ENCODE measurements at regions of chr5 and their contacts with region 1.

Region 1: GRCh38 chr5:21919410-21920022 is 933.6 kb downstream of the CDH12 start:
- DNase-seq: peak; percentile 79
- H3K4me3 ChIP-seq: no peak overlapping the region
- H3K27ac ChIP-seq: no peak overlapping the region
- H3K4me1 ChIP-seq: peaks cover 18% of the 10 kb centered on the region
- H3K27me3 ChIP-seq: no peaks in the 10 kb centered on the region
- CTCF ChIP-seq: peak; percentile 50 to 55
- POLR2A ChIP-seq: no peak

Region 2: GRCh38 chr5:21672911-21673310 is 246.6 kb before region 1 on chr5:
- CTCF ChIA-PET with region 1: no interaction called
- POLR2A ChIA-PET with region 1: no interaction called
- dilution Hi-C with region 1: no loop called
- intact Hi-C with region 1: no loop called
- DNase-seq: no peak
- H3K4me3 ChIP-seq: no peak overlapping the region
- H3K27ac ChIP-seq: no peak overlapping the region
- H3K4me1 ChIP-seq: peaks cover 1% of the 10 kb centered on the region
- H3K27me3 ChIP-seq: no peaks in the 10 kb centered on the region
- CTCF ChIP-seq: no peak
- POLR2A ChIP-seq: no peak

Region 3: GRCh38 chr5:21817668-21818369 is 101.7 kb before region 1 on chr5:
- CTCF ChIA-PET with region 1: interaction called, 4 read pairs
- POLR2A ChIA-PET with region 1: no interaction called
- dilution Hi-C with region 1: no loop called
- intact Hi-C with region 1: loop called (anchors 5 kb)
- DNase-seq: peak; percentile 21
- H3K4me3 ChIP-seq: peak overlapping the region in 2 of 3 experiments; percentile 8 to 11
- H3K27ac ChIP-seq: no peak overlapping the region
- H3K4me1 ChIP-seq: peaks cover 10% of the 10 kb centered on the region
- H3K27me3 ChIP-seq: no peaks in the 10 kb centered on the region
- CTCF ChIP-seq: no peak
- POLR2A ChIP-seq: no peak

Region 4: DNA sequence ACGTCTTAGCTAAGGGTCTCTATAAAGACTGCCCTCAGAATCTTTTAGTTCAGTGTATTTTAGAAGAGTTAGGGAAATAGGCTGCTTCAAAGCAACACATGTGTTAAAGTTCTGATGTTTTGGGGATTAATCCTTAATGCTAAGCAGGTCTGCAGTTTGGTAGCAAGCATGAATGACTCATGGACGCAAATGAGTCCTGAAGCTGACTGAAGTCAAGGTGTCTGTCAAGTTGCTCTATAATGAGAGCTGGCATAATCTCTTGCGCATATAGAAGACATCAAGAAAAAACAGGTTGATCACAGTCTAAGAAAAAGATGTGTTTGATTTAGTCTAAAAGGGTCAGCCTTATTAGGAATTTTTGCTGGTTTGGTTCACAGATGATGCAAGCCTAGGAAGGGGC is 303.6 kb after region 1 on chr5:
- CTCF ChIA-PET with region 1: interaction called, 3 read pairs
- POLR2A ChIA-PET with region 1: no interaction called
- dilution Hi-C with region 1: no loop called
- intact Hi-C with region 1: loop called (anchors 10 kb)
- DNase-seq: no peak
- H3K4me3 ChIP-seq: no peak overlapping the region
- H3K27ac ChIP-seq: no peak overlapping the region
- H3K4me1 ChIP-seq: no peaks in the 10 kb centered on the region
- H3K27me3 ChIP-seq: no peaks in the 10 kb centered on the region
- CTCF ChIP-seq: no peak
- POLR2A ChIP-seq: no peak

Measured in endothelial cell of umbilical vein (primary cell).